Lower leg skin (tissue), 4 donors: ENCODE measurements at regions of chr6 and their contacts with region 1.

Region 1: GRCh38 chr6:113355093-113355492 is 502.1 kb upstream of the MARCKS start:
- DNase-seq: no peak
- H3K4me3 ChIP-seq: no peak overlapping the region
- CTCF ChIP-seq: no peak
- POLR2A ChIP-seq: no peak

Region 2: DNA sequence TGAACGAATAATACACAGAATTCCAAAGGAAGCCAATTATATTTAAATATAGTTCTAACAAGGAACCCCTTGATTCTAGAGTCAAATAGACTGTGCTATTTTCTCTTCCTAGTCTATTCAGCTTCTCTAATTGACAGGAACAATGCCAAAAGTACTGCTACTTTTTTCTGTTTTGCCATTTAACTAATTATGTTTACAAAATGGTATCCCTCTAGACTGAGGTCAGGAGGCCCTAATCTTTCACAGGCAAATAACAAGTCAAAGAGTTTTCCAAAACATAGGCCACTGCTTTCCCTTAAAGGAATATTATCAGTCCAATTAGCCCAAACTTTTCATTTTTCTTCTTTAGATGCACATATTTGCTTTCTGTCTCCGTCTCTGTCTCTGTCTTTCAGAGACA is 468.7 kb before region 1 on chr6:
- intact Hi-C with region 1: no loop called
- DNase-seq: no peak
- H3K4me3 ChIP-seq: no peak overlapping the region
- CTCF ChIP-seq: no peak
- POLR2A ChIP-seq: no peak

Region 3: GRCh38 chr6:113365191-113365590 is 10.1 kb after region 1 on chr6:
- intact Hi-C with region 1: loop called (anchors 1 kb)
- DNase-seq: no peak
- H3K4me3 ChIP-seq: no peak overlapping the region
- CTCF ChIP-seq: no peak
- POLR2A ChIP-seq: no peak